CD4-positive, alpha-beta memory T cell (primary cell): ENCODE measurements at regions of chr1 and their contacts with region 1.

Region 1: GRCh38 chr1:206803221-206803730 is 31.0 kb upstream of the IL10 start:
- DNase-seq: peak; percentile 91 to 96 (median 94)
- H3K4me3 ChIP-seq: peak overlapping the region in 1 of 2 donors; percentile 6
- H3K4me3 Mint-ChIP-seq: peak overlapping the region; percentile 4 to 74 (median 56)
- H3K27ac ChIP-seq: peak overlapping the region; percentile 67
- H3K27ac Mint-ChIP-seq: peak overlapping the region; percentile 89 to 99 (median 97)
- H3K4me1 ChIP-seq: peaks cover 60% of the 10 kb centered on the region
- H3K4me1 Mint-ChIP-seq: peaks cover 45 to 83% (median 66%) of the 10 kb centered on the region in 4 donors
- H3K27me3 ChIP-seq: no peaks in the 10 kb centered on the region
- H3K27me3 Mint-ChIP-seq: no peaks in the 10 kb centered on the region

Region 2: DNA sequence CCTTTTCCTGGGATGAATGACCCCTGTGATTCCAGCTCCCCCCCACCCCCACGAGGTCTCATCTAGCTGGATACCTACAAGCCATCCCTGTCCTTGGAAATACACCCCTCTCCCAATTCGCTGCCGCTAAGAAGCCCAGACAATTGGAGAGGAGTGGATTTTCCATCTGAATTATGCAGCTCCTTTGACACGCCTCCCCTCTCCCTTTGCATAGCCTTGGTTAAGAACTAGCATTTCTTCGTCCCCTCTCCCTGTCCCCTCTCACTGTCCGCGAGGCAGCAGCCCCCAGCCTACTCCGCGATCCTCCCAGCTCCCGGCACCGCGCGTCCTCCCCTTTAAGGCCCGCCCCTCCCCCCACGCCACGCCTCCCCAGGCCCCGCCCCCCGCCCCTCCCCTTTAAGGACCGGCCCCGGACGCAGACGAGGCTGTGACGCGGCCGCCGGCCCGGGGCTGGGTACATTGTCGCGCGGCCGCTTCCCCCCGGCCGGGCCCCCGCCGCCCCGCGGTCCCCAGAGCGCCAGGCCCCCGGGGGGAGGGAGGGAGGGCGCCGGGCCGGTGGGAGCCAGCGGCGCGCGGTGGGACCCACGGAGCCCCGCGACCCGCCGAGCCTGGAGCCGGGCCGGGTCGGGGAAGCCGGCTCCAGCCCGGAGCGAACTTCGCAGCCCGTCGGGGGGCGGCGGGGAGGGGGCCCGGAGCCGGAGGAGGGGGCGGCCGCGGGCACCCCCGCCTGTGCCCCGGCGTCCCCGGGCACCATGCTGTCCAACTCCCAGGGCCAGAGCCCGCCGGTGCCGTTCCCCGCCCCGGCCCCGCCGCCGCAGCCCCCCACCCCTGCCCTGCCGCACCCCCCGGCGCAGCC is 118.6 kb before region 1 on chr1 and contains the start of gene MAPKAPK2:
- CTCF ChIA-PET with region 1: no interaction called
- POLR2A ChIA-PET with region 1: no interaction called
- intact Hi-C with region 1: loop called (anchors 1 kb)
- DNase-seq: peak; percentile 71 to 77 (median 73)
- H3K4me3 ChIP-seq: peak within 1 kb of the TSS; percentile 55 to 93
- H3K4me3 Mint-ChIP-seq: peak within 1 kb of the TSS; percentile 93 to 100 (median 96)
- H3K27ac ChIP-seq: peak within 1 kb of the TSS; percentile 90
- H3K27ac Mint-ChIP-seq: peak within 1 kb of the TSS; percentile 94 to 98 (median 97)
- H3K4me1 ChIP-seq: peaks cover 45% of the 10 kb centered on the region
- H3K4me1 Mint-ChIP-seq: peaks cover 26 to 52% (median 37%) of the 10 kb centered on the region in 4 donors
- H3K27me3 ChIP-seq: no peaks in the 10 kb centered on the region
- H3K27me3 Mint-ChIP-seq: peaks cover 2 to 3% of the 10 kb centered on the region in 2 donors
- total RNA-seq, gene MAPKAPK2: 71.7 to 72.8 TPM

Region 3: DNA sequence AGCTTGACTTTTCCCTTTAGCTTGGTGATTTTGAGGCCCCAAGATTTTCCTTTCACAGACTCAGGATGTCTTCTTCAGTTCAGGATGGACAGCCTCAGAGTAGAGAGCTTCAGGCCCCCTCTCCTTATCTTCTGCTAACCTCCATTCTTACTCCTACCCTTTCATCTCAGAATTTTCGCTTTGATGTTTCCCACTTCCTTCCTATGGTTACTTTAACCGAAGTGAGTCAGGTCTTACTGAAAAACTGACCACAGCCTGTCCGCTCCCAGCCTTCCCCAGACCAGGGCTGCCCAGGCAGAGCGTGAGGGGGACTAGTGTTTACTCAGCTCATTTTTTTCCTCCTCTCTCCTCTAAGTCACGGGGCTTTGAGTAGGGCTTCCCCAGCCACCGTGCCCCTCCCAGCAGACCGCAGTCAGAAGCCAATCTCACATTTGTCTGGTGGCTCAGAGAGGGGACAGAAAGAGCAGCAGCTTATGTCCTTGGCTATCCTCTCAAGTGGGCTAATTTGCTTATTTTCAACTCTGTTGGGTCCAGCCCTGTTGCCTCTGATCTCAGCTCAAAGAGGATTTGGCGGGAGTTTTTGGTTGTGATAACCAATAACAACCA is 36.9 kb before region 1 on chr1:
- CTCF ChIA-PET with region 1: interaction called, 20 read pairs
- POLR2A ChIA-PET with region 1: interaction called, 141 read pairs
- intact Hi-C with region 1: loop called (anchors 1 kb)
- DNase-seq: peak; percentile 67 to 85 (median 74)
- H3K4me3 ChIP-seq: no peak overlapping the region
- H3K4me3 Mint-ChIP-seq: peak overlapping the region; percentile 61 to 82 (median 76)
- H3K27ac ChIP-seq: no peak overlapping the region
- H3K27ac Mint-ChIP-seq: peak overlapping the region; percentile 82 to 95 (median 91)
- H3K4me1 ChIP-seq: peaks cover 67% of the 10 kb centered on the region
- H3K4me1 Mint-ChIP-seq: peaks cover 48 to 72% (median 61%) of the 10 kb centered on the region in 4 donors
- H3K27me3 ChIP-seq: no peaks in the 10 kb centered on the region
- H3K27me3 Mint-ChIP-seq: no peaks in the 10 kb centered on the region

Region 4: GRCh38 chr1:206790502-206791250 is 12.6 kb before region 1 on chr1:
- CTCF ChIA-PET with region 1: interaction called, 25 read pairs
- POLR2A ChIA-PET with region 1: interaction called, 46 read pairs
- intact Hi-C with region 1: no loop called
- DNase-seq: no peak
- H3K4me3 ChIP-seq: no peak overlapping the region
- H3K4me3 Mint-ChIP-seq: peak overlapping the region in 6 of 8 donors; percentile 16 to 75 (median 43)
- H3K27ac ChIP-seq: no peak overlapping the region
- H3K27ac Mint-ChIP-seq: peak overlapping the region in 6 of 7 donors; percentile 44 to 88 (median 74)
- H3K4me1 ChIP-seq: peaks cover 41% of the 10 kb centered on the region
- H3K4me1 Mint-ChIP-seq: peaks cover 38 to 84% (median 56%) of the 10 kb centered on the region in 4 donors
- H3K27me3 ChIP-seq: no peaks in the 10 kb centered on the region
- H3K27me3 Mint-ChIP-seq: peaks cover 0 to 2% of the 10 kb centered on the region in 2 donors

Region 5: DNA sequence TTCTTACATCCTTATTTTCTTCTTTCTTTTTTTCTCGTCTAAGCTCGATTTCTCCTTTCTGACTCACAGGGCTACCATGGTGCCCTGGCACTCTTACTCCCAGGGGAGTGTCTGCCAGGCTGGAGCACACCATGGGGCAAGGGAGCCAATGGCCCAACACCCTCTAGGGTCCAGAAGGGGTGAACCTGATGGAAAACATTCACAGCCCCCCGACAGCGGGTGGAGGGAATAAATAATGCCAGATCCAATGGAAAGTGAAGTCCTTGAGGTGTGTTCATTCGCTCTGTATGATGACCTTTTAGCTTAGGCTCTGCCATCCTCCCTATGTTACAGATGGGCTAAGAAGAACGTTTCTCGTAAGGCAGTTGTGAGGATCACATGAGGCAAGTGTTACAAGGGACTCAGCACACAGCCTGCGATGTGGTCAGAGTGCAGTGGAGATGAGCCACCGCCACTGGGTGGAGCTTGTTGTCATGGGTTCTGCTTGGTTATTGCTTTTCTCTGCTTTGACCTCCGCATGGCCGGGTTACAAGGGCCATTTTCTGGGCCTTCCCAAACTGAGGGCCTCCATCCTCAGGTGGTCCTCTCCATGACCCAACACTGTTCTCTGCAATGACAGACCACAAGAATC is 121.9 kb after region 1 on chr1:
- CTCF ChIA-PET with region 1: interaction called, 92 read pairs
- POLR2A ChIA-PET with region 1: interaction called, 24 read pairs
- intact Hi-C with region 1: loop called (anchors 2 kb)
- DNase-seq: peak; percentile 42 to 61 (median 55)
- H3K4me3 ChIP-seq: no peak overlapping the region
- H3K4me3 Mint-ChIP-seq: no peak overlapping the region
- H3K27ac ChIP-seq: no peak overlapping the region
- H3K27ac Mint-ChIP-seq: no peak overlapping the region
- H3K4me1 ChIP-seq: peaks cover 56% of the 10 kb centered on the region
- H3K4me1 Mint-ChIP-seq: peaks cover 13 to 27% (median 25%) of the 10 kb centered on the region in 4 donors
- H3K27me3 ChIP-seq: no peaks in the 10 kb centered on the region
- H3K27me3 Mint-ChIP-seq: no peaks in the 10 kb centered on the region